HEK293T (cell line): ENCODE measurements at regions of chr6 and their contacts with region 1.

Region 1: DNA sequence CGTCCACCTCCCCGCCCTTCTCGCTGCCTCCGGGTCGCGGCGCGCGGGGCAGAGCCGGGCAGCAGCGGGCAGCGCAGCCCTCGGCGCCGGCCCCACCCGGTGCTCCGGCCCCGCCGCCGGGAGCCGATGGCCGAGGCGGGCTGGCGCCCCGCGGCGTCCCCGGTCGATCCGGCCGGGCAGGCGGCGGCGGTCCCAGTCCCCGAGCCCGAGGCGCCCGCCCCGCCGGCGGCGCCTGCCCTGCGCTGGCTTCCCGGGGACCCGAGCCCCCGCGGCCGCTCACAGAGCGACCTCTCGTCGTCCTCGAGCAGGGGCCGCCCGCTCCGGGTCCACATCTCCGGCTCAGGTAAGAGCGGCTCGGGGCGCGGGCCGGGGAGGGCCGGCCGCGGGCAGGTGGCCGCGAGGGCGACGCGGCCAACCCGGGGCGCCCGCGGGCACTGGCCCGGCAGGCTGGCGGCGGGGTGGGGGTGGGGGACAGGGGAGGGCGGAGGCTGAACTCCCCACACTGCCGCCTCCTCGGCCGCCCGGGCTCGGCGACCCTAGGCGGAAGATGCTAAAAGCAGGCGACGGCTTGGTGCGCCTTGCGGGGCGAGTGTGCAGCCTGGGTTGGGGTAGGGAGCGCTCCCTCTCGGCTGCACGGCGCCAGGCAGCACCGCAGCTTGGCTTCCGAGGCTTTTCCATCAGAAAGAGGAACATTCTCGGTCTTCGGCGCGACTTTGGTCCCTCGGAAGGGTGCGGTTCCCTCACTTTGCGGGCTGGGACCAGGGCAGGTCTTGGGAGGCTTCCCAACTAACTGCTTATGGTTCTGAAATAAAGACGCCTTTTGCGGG is 25.6 kb upstream of the FUCA2 start:
- DNase-seq: peak; percentile 80

Region 2: GRCh38 chr6:143510991-143511891 is 25.8 kb before region 1 on chr6 and contains the start of gene FUCA2:
- CTCF ChIA-PET with region 1: interaction called, 16 read pairs
- POLR2A ChIA-PET with region 1: interaction called, 5 read pairs
- DNase-seq: peak; percentile 84

Region 3: DNA sequence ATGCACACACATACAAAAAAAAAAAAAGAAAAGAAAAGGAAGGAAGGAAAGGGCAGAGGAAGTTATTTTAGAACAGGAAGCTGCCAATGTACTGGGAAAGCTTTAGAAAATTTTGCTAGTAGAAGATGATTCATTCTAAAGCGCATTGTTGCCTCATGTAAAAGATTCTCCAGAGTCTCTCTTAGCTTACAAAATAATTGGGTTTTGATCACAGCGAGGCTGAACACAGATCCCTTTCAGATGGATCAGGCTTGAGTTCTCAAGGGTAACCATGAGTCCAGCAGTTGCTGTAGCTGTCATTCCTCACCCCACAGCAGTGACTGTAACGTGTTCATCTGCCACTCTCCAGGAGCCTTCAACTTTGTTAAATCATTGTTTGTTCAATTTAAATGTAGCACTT is 222.6 kb after region 1 on chr6:
- CTCF ChIA-PET with region 1: no interaction called
- POLR2A ChIA-PET with region 1: no interaction called
- DNase-seq: no peak